ENCODE measurements at regions of chr2 and their contacts with region 1.

Region 1: DNA sequence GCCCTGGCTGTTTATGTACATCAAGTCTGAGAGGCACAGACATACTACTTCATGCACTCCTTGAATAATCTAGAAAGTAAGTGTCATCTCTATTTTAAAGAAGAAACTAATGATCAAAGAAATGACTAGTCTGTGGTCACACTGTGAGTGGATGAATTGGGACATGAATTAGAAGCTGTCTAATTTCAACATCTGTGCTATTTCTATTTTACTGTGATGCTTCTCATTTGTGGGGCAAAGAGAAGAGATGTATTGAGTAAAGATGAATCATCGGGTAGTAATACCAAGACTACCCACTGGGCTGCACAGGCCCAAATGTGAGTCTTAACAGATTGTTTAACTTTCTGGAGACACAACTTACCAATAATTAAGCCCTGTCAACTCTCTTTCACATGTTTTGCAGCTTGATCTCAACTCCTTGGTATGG is 42.4 kb upstream of the MTIF2 start:
- DNase-seq: peak; percentile 63
- H3K4me3 Mint-ChIP-seq: no peak overlapping the region
- H3K27ac Mint-ChIP-seq: peak overlapping the region; percentile 57
- H3K4me1 Mint-ChIP-seq: peaks cover 25% of the 10 kb centered on the region
- H3K27me3 Mint-ChIP-seq: no peaks in the 10 kb centered on the region

Region 2: DNA sequence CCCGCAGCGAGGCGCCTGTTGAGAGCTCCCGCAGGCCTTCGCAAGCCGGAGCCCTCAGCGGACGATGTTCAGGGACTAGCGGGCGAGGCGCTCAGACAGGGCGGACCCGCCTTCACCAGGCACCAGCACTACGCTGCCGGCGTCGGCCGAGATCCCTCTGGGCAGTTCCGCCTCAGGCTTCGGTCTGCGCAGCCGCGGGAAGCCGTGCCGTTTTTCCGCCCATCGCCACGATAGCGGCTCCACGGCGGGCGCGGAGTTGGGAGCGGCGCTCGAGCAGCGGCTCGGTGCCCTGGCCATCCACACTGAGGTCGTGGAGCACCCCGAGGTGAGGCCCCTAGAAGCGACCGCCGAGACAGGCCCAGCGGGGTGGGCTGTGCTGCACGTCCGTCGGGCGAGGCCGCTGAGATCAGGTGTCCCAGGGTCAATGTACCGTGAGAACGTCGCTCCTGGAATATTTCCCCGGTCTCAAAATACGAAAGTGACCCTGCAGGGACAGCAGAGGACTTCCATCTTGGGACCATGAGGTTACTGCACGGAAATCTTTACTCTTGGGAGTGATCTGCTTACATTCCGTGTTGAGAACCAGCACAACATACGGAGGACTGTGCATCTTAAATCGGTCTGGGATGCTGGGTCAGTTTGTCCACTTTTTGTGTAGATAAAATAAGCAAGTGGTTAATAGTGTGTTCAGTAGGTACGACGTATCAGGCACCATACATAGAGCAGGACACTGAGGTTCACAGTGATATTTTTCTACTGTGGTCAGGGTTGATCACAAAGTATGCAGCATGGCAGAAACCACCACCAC is 29.1 kb before region 1 on chr2:
- CTCF ChIA-PET with region 1: interaction called, 3 read pairs
- intact Hi-C with region 1: loop called (anchors 1 kb)
- DNase-seq: peak; percentile 85
- H3K4me3 Mint-ChIP-seq: peak overlapping the region; percentile 84
- H3K27ac Mint-ChIP-seq: peak overlapping the region; percentile 85
- H3K4me1 Mint-ChIP-seq: peaks cover 22% of the 10 kb centered on the region
- H3K27me3 Mint-ChIP-seq: no peaks in the 10 kb centered on the region

Region 3: DNA sequence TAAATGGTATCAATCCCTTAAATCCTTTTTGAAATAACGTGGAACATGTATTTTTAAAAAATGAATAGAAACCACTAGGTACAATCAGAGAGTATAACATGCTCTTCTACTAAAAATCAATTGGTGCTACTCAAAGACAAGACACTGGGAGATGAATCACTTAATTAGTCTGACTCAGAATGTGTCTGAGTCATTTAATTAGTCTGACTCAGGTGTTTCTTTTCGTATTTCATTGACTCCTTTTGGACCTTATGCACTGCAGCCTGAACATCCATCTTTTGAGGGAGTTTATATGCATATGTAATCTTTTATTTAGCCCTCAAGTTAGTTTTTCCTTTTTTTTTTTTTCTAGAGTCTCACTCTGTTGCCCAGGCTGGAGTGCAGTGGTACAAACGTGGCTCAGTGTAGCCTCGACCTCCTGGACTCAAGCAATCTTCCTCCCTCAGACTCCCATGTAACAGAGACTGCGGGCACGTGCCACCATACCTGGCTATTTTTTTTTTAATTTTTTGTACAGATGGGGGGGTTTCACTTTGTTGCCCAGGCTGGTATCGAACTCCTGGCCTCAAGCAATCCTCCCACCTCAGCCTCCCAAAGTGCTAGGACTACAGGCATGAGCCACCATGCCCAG is 279.5 kb after region 1 on chr2:
- CTCF ChIA-PET with region 1: interaction called, 3 read pairs
- intact Hi-C with region 1: loop called (anchors 2 kb)
- DNase-seq: no peak
- H3K4me3 Mint-ChIP-seq: no peak overlapping the region
- H3K27ac Mint-ChIP-seq: no peak overlapping the region
- H3K4me1 Mint-ChIP-seq: peaks cover 40% of the 10 kb centered on the region
- H3K27me3 Mint-ChIP-seq: no peaks in the 10 kb centered on the region

Region 4: DNA sequence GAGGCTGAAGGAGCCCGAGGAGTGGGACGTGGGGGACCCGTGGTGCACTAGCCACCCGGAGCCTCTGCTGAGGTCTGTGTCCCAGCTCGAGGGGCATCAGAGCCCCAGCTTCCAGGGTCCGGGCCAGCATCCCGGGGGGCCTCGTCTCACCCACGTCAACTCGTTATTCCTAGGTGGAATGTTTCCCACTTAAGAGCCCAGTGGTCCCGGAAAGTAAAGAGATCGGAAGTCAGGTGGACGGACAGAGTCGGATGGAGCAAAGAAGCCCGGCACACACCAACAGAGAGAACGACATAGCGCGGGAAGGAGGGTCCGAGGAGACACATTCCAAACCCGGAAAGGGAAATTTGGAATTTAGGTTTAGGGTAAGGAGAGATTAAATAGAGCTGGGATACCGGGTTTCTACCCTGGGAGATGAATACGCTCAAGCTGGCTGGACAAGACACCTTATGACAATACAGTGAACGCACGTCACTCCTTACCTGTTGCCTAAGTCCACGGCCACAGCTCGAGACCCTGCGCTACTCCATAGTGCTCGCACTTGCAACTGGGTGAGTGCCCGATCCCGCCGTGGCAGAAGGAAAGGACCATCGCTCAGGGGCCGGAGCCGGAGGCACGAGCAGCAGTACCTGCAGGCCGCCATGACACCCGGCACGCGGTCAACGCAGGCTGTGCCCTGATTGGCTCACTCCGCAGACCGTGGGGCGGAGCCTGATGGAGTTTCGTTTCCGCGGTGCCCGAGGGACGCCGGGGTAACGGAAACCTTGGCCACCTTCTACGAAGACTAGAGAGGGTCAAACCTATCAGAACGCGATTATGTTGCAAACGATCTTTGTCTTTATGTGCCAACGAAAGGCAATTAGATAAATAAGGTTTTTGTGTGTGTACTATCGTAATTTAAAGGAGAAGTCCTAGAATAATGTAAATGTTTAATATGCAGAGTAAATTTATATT is 382.0 kb after region 1 on chr2 and contains the start of gene PNPT1:
- CTCF ChIA-PET with region 1: no interaction called
- intact Hi-C with region 1: loop called (anchors 5 kb)
- DNase-seq: peak; percentile 96
- H3K4me3 Mint-ChIP-seq: peak within 1 kb of the TSS; percentile 92
- H3K27ac Mint-ChIP-seq: peak within 1 kb of the TSS; percentile 86
- H3K4me1 Mint-ChIP-seq: peaks cover 34% of the 10 kb centered on the region
- H3K27me3 Mint-ChIP-seq: no peaks in the 10 kb centered on the region
- total RNA-seq, gene PNPT1: 54.1 to 60.7 TPM